PC-3 (cell line): ENCODE measurements at regions of chr6 and their contacts with region 1.

Region 1: DNA sequence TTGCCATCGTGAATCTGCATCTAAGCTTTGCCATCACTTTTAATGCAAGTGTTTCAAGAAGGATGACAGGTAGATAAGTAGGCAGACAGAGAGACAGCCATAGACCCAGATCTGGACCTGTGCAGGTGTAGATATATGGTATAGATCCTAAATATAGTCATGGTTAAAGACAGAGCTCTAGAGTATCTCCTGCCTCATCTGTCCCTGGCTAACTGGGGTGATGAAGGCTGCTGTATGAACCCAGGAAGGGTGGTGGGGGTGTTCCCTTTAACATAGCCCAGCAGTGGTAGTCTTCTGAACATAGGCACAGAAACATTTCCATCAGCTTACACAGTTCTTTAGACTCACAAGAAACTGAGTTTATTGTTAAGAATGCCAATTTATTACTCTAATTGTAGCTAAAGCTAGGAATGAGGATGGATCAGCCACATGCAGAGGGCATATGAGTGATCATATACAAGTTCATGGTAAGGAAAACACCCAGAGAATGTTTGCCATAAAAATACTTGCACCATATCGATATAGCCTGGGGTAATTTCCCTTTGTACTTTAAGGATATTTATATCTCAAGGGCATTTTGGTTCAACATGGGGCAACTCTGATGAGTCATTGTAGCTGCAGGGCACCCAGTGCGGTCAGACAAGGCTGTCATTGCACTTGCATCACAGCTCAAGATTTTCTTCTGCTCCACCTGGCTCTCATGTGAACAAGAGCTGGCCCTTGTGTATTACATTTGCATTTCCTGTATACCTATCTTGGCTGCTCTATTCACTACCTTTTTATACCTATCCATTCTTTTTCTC is 587.1 kb downstream of the EPM2A start:
- DNase-seq: peak; percentile 91
- ATAC-seq: peak; percentile 70
- H3K4me3 ChIP-seq: no peak overlapping the region
- H3K27ac ChIP-seq: peak overlapping the region; percentile 50
- H3K4me1 ChIP-seq: peaks cover 31% of the 10 kb centered on the region
- H3K27me3 ChIP-seq: no peaks in the 10 kb centered on the region
- CTCF ChIP-seq: no peak

Region 2: GRCh38 chr6:145214570-145214969 is 66.4 kb after region 1 on chr6:
- CTCF ChIA-PET with region 1: no interaction called
- POLR2A ChIA-PET with region 1: no interaction called
- intact Hi-C with region 1: loop called (anchors 5 kb)
- DNase-seq: peak; percentile 53
- ATAC-seq: no peak
- H3K4me3 ChIP-seq: no peak overlapping the region
- H3K27ac ChIP-seq: no peak overlapping the region
- H3K4me1 ChIP-seq: no peaks in the 10 kb centered on the region
- H3K27me3 ChIP-seq: no peaks in the 10 kb centered on the region
- CTCF ChIP-seq: peak; percentile 66; the same call in 1 of the 2 replicates